Psoas muscle (tissue), 8 donors: ENCODE measurements at regions of chr5 and their contacts with region 1.

Region 1: GRCh38 chr5:139985733-139986132 is 57.4 kb downstream of the NRG2 start:
- DNase-seq: peak in 1 of 2 donors; percentile 72
- ATAC-seq: peak; percentile 96 to 98 (median 98)
- H3K4me3 ChIP-seq: no peak overlapping the region
- H3K27ac ChIP-seq: peak overlapping the region; percentile 82
- H3K4me1 ChIP-seq: peaks cover 41% of the 10 kb centered on the region
- H3K27me3 ChIP-seq: no peaks in the 10 kb centered on the region
- CTCF ChIP-seq: no peak

Region 2: DNA sequence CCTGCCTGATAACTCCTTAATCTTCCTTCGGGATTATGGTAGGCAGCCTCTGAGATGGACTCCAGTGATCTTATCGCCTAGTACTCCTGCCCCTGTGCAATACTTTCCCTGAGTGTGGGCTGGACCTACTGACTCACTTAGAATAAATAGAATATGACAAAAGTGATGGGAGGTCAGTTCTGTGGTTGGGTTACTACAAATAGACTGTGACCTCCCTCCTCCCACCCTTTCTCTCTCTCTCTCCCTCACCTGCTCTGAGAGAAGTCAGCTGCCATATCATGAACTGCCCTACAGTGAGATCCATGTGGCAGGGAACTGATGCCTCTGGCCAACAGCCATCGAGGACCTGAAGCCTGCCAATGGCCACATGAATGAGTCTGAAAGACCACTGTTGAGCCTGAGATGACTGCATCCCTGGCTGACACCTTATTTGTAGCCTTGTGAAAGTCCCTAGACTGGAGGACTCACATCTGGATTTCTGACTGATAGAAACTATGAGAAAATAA is 25.6 kb after region 1 on chr5:
- intact Hi-C with region 1: loop called in 1 of 2 experiments (anchors 2 kb)
- DNase-seq: peak; percentile 66 to 92
- ATAC-seq: peak; percentile 94 to 98 (median 96)
- H3K4me3 ChIP-seq: no peak overlapping the region
- H3K27ac ChIP-seq: peak overlapping the region; percentile 91
- H3K4me1 ChIP-seq: peaks cover 56% of the 10 kb centered on the region
- H3K27me3 ChIP-seq: no peaks in the 10 kb centered on the region
- CTCF ChIP-seq: no peak

Region 3: DNA sequence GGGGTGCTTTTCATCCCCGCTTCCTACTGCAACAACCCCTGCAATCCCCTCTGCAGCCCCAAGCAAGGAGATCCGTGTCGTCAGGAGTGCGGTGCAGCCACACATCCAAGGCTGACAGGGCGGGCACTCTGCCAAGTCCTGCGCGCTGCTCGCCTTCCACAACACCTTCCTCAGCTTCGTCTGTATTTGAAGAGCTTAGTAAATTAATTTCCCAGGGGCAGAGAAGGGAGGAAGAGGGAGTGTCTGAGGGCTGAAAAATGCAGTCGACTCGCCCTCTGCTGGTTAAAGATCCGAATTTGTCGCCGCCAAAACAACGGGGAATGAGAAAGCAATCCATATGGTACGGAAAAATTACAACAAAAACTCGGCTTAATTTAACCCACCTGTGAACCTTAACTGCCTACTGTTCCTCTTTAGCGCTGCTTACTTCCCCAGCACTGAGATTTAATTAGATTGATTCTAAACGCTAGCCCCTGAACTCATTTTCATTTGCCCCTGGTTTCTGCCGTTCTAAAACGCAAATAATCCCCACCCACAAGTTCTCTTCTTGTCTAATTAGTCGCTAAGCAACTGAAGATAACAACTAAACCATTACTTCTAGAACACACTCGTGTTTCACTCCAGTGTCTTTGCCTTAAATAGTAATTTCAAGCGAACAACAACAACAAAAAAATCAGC is 1054.5 kb after region 1 on chr5:
- intact Hi-C with region 1: no loop called
- DNase-seq: peak; percentile 13 to 53
- ATAC-seq: peak in 1 of 4 donors; percentile 69
- H3K4me3 ChIP-seq: peak overlapping the region; percentile 54
- H3K27ac ChIP-seq: no peak overlapping the region
- H3K4me1 ChIP-seq: no peaks in the 10 kb centered on the region
- H3K27me3 ChIP-seq: no peaks in the 10 kb centered on the region
- CTCF ChIP-seq: peak; percentile 38